CD4-positive, alpha-beta memory T cell (primary cell): ENCODE measurements at regions of chr3 and their contacts with region 1.

Region 1: GRCh38 chr3:14921078-14921616 is 26.2 kb upstream of the NR2C2 start:
- DNase-seq: peak; percentile 73 to 79 (median 77)
- H3K4me3 ChIP-seq: no peak overlapping the region
- H3K4me3 Mint-ChIP-seq: no peak overlapping the region
- H3K27ac ChIP-seq: no peak overlapping the region
- H3K27ac Mint-ChIP-seq: no peak overlapping the region
- H3K4me1 ChIP-seq: peaks cover 5% of the 10 kb centered on the region
- H3K4me1 Mint-ChIP-seq: peaks cover 0 to 4% (median 0%) of the 10 kb centered on the region in 4 donors
- H3K27me3 ChIP-seq: no peaks in the 10 kb centered on the region
- H3K27me3 Mint-ChIP-seq: peaks cover 0 to 2% of the 10 kb centered on the region in 2 donors

Region 2: GRCh38 chr3:14203521-14204079 is 717.5 kb before region 1 on chr3:
- CTCF ChIA-PET with region 1: interaction called, 13 read pairs
- POLR2A ChIA-PET with region 1: no interaction called
- intact Hi-C with region 1: no loop called
- DNase-seq: peak in 4 of 5 donors; percentile 31 to 43 (median 35)
- H3K4me3 ChIP-seq: no peak overlapping the region
- H3K4me3 Mint-ChIP-seq: no peak overlapping the region
- H3K27ac ChIP-seq: no peak overlapping the region
- H3K27ac Mint-ChIP-seq: peak overlapping the region in 1 of 7 donors; percentile 56
- H3K4me1 ChIP-seq: no peaks in the 10 kb centered on the region
- H3K4me1 Mint-ChIP-seq: peaks cover 3 to 6% (median 5%) of the 10 kb centered on the region in 4 donors
- H3K27me3 ChIP-seq: no peaks in the 10 kb centered on the region
- H3K27me3 Mint-ChIP-seq: no peaks in the 10 kb centered on the region

Region 3: DNA sequence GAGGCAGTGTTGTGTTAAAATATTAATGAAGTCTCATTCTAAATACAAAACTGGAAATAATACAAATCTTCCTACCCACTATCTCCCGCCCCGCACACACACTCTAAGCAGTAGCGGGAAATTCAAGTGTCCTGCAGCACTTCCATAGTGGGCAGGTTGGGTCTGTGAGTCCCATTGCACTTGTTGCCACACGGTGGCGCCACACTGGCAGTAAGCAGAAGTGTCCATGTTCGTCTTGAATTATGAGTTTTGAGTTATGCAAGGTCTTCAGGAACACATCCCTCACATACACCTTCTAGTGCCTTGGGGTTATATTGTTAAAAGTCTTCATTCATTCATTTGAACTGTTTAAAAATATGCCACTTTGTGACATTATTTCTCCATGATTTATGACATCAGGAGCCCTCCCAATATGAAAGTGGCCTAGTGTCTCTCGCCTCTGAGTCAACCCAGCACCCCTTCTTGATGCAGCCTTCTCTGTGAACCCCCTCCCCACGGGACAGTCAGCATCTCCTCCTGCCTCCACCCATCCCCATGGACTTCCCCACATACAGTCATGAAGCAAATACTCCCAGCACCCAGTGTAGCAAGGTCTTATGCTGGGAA is 287.2 kb before region 1 on chr3:
- CTCF ChIA-PET with region 1: interaction called, 33 read pairs
- POLR2A ChIA-PET with region 1: no interaction called
- intact Hi-C with region 1: loop called (anchors 1 kb)
- DNase-seq: peak; percentile 44 to 60 (median 52)
- H3K4me3 ChIP-seq: no peak overlapping the region
- H3K4me3 Mint-ChIP-seq: no peak overlapping the region
- H3K27ac ChIP-seq: no peak overlapping the region
- H3K27ac Mint-ChIP-seq: no peak overlapping the region
- H3K4me1 ChIP-seq: no peaks in the 10 kb centered on the region
- H3K4me1 Mint-ChIP-seq: no peaks in the 10 kb centered on the region
- H3K27me3 ChIP-seq: no peaks in the 10 kb centered on the region
- H3K27me3 Mint-ChIP-seq: peaks cover 31 to 39% of the 10 kb centered on the region in 2 donors

Region 4: DNA sequence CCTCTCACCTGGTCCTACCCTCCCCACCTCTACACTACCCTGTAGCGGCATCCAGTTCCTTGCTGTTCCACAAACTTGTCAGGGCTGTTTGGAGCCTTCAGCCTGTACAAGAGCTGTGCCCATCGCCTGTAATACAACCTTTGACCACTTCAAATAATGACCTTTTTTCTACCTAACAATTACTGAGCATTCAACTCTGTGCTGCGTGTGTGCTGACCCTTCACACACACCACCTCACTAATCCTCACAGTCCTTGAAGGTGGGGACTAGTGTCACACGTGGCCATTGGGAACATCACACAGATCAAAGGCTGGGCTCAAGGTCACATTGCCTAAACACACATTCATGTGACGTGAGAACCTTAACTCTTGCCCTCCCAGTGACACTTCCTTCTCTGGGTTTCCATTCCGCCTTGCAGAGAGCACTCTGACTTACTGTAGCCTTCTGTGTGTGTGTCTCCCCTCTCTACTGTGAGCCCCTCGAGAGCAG is 243.1 kb before region 1 on chr3:
- CTCF ChIA-PET with region 1: interaction called, 24 read pairs
- POLR2A ChIA-PET with region 1: no interaction called
- intact Hi-C with region 1: loop called (anchors 1 kb)
- DNase-seq: no peak
- H3K4me3 ChIP-seq: no peak overlapping the region
- H3K4me3 Mint-ChIP-seq: no peak overlapping the region
- H3K27ac ChIP-seq: no peak overlapping the region
- H3K27ac Mint-ChIP-seq: no peak overlapping the region
- H3K4me1 ChIP-seq: no peaks in the 10 kb centered on the region
- H3K4me1 Mint-ChIP-seq: no peaks in the 10 kb centered on the region
- H3K27me3 ChIP-seq: no peaks in the 10 kb centered on the region
- H3K27me3 Mint-ChIP-seq: no peaks in the 10 kb centered on the region

Region 5: DNA sequence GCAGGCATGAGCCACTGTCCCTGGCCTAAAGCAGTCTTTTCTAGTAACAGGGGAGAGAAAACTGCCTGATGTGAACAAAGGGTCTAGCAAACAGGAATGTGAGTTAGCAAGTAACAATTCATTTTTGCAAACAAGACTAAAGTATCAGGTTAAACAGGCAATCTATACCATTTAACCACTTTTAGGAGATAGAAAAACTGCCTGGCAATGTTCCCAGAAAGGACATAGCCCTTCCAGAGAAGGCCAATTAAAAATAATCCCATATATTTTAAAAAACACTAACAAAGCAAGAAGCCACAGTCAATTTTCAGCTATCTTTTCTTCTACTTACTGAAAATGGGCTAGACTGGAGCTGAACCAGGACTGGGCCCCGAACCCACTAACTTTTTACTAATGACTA is 171.5 kb after region 1 on chr3:
- CTCF ChIA-PET with region 1: no interaction called
- POLR2A ChIA-PET with region 1: no interaction called
- intact Hi-C with region 1: loop called (anchors 5 kb)
- DNase-seq: no peak
- H3K4me3 ChIP-seq: no peak overlapping the region
- H3K4me3 Mint-ChIP-seq: no peak overlapping the region
- H3K27ac ChIP-seq: no peak overlapping the region
- H3K27ac Mint-ChIP-seq: no peak overlapping the region
- H3K4me1 ChIP-seq: peaks cover 8% of the 10 kb centered on the region
- H3K4me1 Mint-ChIP-seq: peaks cover 8 to 21% (median 13%) of the 10 kb centered on the region in 4 donors
- H3K27me3 ChIP-seq: no peaks in the 10 kb centered on the region
- H3K27me3 Mint-ChIP-seq: no peaks in the 10 kb centered on the region